Esophagus squamous epithelium (tissue), 5 donors: ENCODE measurements at regions of chr12 and their contacts with region 1.

Region 1: GRCh38 chr12:54401119-54401518 is 16.6 kb upstream of the ZNF385A start:
- DNase-seq: no peak
- H3K4me3 ChIP-seq: no peak overlapping the region
- H3K27ac ChIP-seq: peak overlapping the region in 3 of 4 donors; percentile 2 to 57 (median 22)
- H3K4me1 ChIP-seq: peaks cover 0 to 34% (median 7%) of the 10 kb centered on the region in 3 donors
- H3K27me3 ChIP-seq: no peaks in the 10 kb centered on the region
- CTCF ChIP-seq: no peak
- POLR2A ChIP-seq: no peak

Region 2: GRCh38 chr12:53844989-53845844 is 555.9 kb before region 1 on chr12:
- intact Hi-C with region 1: no loop called
- DNase-seq: no peak
- H3K4me3 ChIP-seq: no peak overlapping the region
- H3K27ac ChIP-seq: no peak overlapping the region
- H3K4me1 ChIP-seq: no peaks in the 10 kb centered on the region
- H3K27me3 ChIP-seq: peaks cover 0 to 81% (median 0%) of the 10 kb centered on the region in 4 donors
- CTCF ChIP-seq: no peak
- POLR2A ChIP-seq: no peak

Region 3: DNA sequence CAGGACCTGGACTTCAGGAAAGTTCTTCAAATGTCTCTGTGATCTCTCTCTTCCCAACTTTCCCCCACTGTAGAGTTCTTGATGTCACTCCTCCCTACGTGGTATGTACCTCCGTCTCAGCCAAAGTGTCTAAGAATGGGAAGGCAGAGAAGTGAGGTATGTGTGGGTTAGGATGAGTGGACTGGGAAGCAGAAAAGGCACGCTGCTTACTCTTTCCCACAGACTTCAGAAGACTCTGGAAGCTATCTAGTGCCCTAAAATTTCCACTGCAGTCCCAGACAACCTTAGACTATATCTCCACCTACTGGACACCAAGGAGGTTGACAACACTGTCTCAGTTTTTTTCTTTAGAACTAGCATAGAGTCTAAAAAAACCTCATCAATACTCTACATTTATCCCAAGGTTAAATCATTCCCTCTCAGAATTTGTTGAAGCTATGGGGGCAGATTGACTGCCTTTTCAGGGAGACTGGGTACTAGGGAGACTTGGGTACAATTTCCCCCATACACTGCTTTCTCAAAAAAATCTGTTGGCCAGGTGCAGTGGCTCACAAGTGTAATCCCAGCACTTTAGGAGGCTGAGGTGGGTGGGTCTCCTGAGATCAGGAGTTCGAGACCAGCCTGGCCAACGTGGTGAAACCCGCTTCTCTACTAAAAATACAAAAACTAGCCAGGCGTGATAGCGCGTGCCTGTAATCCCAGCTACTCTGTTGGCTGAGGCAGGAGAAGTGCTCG is 38.6 kb after region 1 on chr12:
- intact Hi-C with region 1: loop called (anchors 2 kb)
- DNase-seq: no peak
- H3K4me3 ChIP-seq: no peak overlapping the region
- H3K27ac ChIP-seq: peak overlapping the region in 1 of 4 donors; percentile 49
- H3K4me1 ChIP-seq: peaks cover 0 to 7% (median 0%) of the 10 kb centered on the region in 3 donors
- H3K27me3 ChIP-seq: peaks cover 0 to 19% (median 0%) of the 10 kb centered on the region in 4 donors
- CTCF ChIP-seq: peak; percentile 46 to 86 (median 78)
- POLR2A ChIP-seq: no peak